ENCODE measurements at regions of chr18 and their contacts with region 1.

Region 1: DNA sequence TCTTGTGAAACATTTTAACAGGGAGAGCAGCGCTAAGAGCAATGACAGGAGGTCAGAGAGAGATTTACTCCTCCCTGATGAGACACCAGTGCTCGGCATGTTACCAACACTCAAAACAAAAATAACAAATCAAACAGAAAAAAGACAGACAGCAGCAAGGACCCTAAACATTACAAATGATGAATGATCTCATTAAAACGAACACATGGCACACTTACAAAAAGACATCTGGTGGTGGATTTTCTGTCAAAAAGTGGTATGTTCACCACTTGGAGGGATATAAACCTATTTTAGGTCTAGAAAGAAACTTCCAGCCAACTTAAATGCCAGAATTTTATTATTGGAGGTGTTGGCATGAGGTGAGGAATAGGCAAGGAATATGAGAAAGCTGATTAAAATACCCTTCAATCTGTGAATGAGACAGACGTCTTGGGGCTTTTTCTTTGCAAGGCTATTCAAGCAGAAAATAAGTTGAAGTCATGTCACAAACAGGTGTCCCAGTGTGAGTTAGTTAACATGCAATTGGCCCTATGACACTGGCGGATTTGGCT is 112.8 kb downstream of the PRELID3A start:
- DNase-seq: no peak
- H3K4me3 ChIP-seq: no peak overlapping the region
- H3K27ac ChIP-seq: no peak overlapping the region
- H3K4me1 ChIP-seq: peaks cover 0 to 28% (median 8%) of the 10 kb centered on the region in 4 donors
- H3K27me3 ChIP-seq: no peaks in the 10 kb centered on the region
- CTCF ChIP-seq: no peak

Region 2: DNA sequence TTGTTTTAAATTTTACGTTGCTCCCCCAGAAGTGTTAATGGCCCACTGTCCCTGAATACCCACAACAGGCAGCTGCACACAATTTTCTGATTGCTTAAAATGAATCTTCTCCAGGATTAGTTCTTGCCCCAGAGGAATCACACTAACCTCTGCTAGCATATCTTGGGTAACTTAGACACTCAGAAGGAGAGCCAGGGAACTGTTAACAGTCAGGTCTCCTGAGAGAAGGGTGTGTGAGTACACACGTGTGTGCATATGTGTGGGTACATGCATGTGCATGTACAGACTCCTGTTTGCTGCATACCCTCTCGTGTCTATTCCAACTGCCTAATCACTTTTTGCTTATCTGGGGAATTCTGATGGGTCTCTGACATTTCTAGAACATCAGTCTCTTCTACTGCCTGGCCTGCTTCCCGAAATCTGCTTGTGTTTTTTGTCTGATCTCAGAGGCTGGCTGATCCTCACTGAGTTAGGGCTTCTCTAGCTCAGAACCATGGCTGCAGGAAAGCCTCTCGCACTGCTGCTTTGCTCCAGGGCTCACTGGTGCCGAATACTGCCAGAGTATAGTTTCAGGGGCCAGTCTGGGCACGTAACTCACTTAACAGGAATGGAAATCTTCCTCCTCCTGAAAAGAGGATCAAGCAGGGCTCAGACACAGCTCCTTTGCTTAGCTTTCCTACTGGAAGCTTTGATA is 50.0 kb before region 1 on chr18:
- intact Hi-C with region 1: no loop called
- DNase-seq: no peak
- H3K4me3 ChIP-seq: no peak overlapping the region
- H3K27ac ChIP-seq: no peak overlapping the region
- H3K4me1 ChIP-seq: no peaks in the 10 kb centered on the region
- H3K27me3 ChIP-seq: no peaks in the 10 kb centered on the region
- CTCF ChIP-seq: no peak

Region 3: GRCh38 chr18:12645254-12646203 is 125.0 kb after region 1 on chr18:
- intact Hi-C with region 1: loop called (anchors 10 kb)
- DNase-seq: peak; percentile 65 to 88
- H3K4me3 ChIP-seq: peak overlapping the region; percentile 24 to 37
- H3K27ac ChIP-seq: peak overlapping the region; percentile 71
- H3K4me1 ChIP-seq: peaks cover 0 to 28% (median 17%) of the 10 kb centered on the region in 4 donors
- H3K27me3 ChIP-seq: no peaks in the 10 kb centered on the region
- CTCF ChIP-seq: no peak

Measured in tibial artery (tissue), 4 donors.